ENCODE measurements at regions of chr15 and their contacts with region 1.

Region 1: DNA sequence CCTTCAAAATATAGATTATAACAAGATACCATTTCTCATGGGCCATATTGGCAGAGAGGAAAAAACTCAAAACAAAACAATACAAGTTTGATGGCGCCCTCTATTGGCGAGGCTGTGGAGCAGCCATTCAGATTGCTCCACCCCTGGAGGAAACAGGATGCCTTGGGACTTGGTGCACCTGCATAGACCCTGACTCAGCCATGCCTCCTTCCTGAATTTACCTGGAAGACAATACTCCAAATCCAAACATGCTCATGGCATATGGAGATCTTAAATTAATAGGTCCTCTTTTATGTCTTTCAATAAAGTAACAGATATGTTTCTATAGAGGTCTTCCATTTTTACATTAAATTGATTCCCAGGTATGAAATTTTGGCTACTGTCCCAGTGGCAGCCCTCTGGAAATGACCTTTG is 90.0 kb downstream of the APBA2 start:
- DNase-seq: peak; percentile 50 to 84 (median 76)
- ATAC-seq: peak; percentile 61
- H3K4me3 ChIP-seq: no peak overlapping the region
- H3K4me3 Mint-ChIP-seq: no peak overlapping the region
- H3K27ac ChIP-seq: no peak overlapping the region
- H3K27ac Mint-ChIP-seq: peak overlapping the region; percentile 80
- H3K4me1 ChIP-seq: peaks cover 54% of the 10 kb centered on the region
- H3K4me1 Mint-ChIP-seq: peaks cover 62% of the 10 kb centered on the region
- H3K27me3 ChIP-seq: no peaks in the 10 kb centered on the region
- H3K27me3 Mint-ChIP-seq: no peaks in the 10 kb centered on the region
- CTCF ChIP-seq: peak; percentile 97

Region 2: DNA sequence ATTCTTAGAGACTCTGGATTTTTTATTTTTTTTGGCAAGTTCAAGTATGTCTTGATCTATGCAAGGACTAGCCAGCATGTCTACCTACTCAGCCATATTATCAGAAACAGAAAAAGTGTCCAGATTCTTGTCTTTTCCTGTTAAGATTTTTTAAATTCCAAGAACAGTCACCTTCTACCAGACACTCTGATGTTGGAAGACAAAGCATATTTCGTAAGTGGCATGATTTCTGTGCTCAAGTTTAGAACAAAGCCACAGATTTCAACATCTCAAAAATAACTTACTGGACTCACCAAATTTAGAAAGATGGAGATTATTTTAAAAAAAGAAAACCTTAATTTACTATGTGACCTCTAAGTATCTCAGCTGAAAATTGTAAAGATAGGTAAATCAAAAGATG is 189.3 kb before region 1 on chr15:
- CTCF ChIA-PET with region 1: no interaction called
- POLR2A ChIA-PET with region 1: no interaction called
- intact Hi-C with region 1: loop called in 1 of 2 experiments (anchors 10 kb)
- DNase-seq: no peak
- ATAC-seq: no peak
- H3K4me3 ChIP-seq: no peak overlapping the region
- H3K4me3 Mint-ChIP-seq: no peak overlapping the region
- H3K27ac ChIP-seq: no peak overlapping the region
- H3K27ac Mint-ChIP-seq: no peak overlapping the region
- H3K4me1 ChIP-seq: no peaks in the 10 kb centered on the region
- H3K4me1 Mint-ChIP-seq: peaks cover 5% of the 10 kb centered on the region
- H3K27me3 ChIP-seq: no peaks in the 10 kb centered on the region
- H3K27me3 Mint-ChIP-seq: peaks cover 17% of the 10 kb centered on the region
- CTCF ChIP-seq: no peak

Region 3: GRCh38 chr15:28885630-28886430 is 89.9 kb before region 1 on chr15 and contains the start of gene APBA2:
- CTCF ChIA-PET with region 1: interaction called, 41 read pairs
- POLR2A ChIA-PET with region 1: interaction called, 8 read pairs
- intact Hi-C with region 1: loop called (anchors 1 kb)
- DNase-seq: peak; percentile 9 to 79 (median 60)
- ATAC-seq: peak; percentile 59
- H3K4me3 ChIP-seq: peak within 1 kb of the TSS; percentile 75 to 76
- H3K4me3 Mint-ChIP-seq: peak within 1 kb of the TSS; percentile 91
- H3K27ac ChIP-seq: peak within 1 kb of the TSS; percentile 67 to 69
- H3K27ac Mint-ChIP-seq: peak within 1 kb of the TSS; percentile 99
- H3K4me1 ChIP-seq: peaks cover 44% of the 10 kb centered on the region
- H3K4me1 Mint-ChIP-seq: peaks cover 46% of the 10 kb centered on the region
- H3K27me3 ChIP-seq: no peaks in the 10 kb centered on the region
- H3K27me3 Mint-ChIP-seq: no peaks in the 10 kb centered on the region
- CTCF ChIP-seq: no peak
- total RNA-seq, gene APBA2: 106 to 108 TPM

Region 4: DNA sequence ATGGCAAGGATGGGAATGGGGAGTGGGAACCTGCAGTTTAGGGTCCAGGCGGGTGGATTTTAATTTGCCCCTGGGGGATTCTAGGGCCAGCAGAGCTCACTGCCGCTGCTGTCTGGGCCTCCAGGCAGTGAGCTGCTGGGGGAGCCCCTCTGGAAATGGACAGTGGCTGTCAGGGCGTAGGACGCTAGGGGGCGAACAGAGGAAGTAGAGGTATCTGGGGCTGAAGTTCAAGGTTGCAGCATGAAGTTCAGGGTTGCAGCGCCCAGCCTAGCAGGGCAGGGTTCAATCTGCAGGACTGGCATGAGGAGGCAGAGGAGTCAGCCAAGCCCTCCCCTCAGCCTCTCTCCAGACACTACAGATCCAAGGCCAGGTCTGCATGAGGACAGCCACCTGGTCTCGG is 40.4 kb before region 1 on chr15:
- CTCF ChIA-PET with region 1: interaction called, 37 read pairs
- POLR2A ChIA-PET with region 1: no interaction called
- intact Hi-C with region 1: loop called (anchors 1 kb)
- DNase-seq: peak; percentile 35 to 82 (median 72)
- ATAC-seq: peak; percentile 67
- H3K4me3 ChIP-seq: peak overlapping the region in 1 of 2 experiments; percentile 13
- H3K4me3 Mint-ChIP-seq: peak overlapping the region; percentile 63
- H3K27ac ChIP-seq: peak overlapping the region in 1 of 2 experiments; percentile 81
- H3K27ac Mint-ChIP-seq: peak overlapping the region; percentile 96
- H3K4me1 ChIP-seq: peaks cover 70% of the 10 kb centered on the region
- H3K4me1 Mint-ChIP-seq: peaks cover 89% of the 10 kb centered on the region
- H3K27me3 ChIP-seq: no peaks in the 10 kb centered on the region
- H3K27me3 Mint-ChIP-seq: no peaks in the 10 kb centered on the region
- CTCF ChIP-seq: peak; percentile 61

Region 5: GRCh38 chr15:28948036-28948435 is 27.7 kb before region 1 on chr15:
- CTCF ChIA-PET with region 1: interaction called, 10 read pairs
- POLR2A ChIA-PET with region 1: interaction called, 3 read pairs
- intact Hi-C with region 1: loop called in 1 of 2 experiments (anchors 2 kb)
- DNase-seq: peak in 1 of 9 experiments; percentile 43
- ATAC-seq: no peak
- H3K4me3 ChIP-seq: peak overlapping the region; percentile 18 to 40
- H3K4me3 Mint-ChIP-seq: peak overlapping the region; percentile 84
- H3K27ac ChIP-seq: peak overlapping the region; percentile 59 to 67
- H3K27ac Mint-ChIP-seq: peak overlapping the region; percentile 98
- H3K4me1 ChIP-seq: peaks cover 86% of the 10 kb centered on the region
- H3K4me1 Mint-ChIP-seq: peaks cover 81% of the 10 kb centered on the region
- H3K27me3 ChIP-seq: no peaks in the 10 kb centered on the region
- H3K27me3 Mint-ChIP-seq: no peaks in the 10 kb centered on the region
- CTCF ChIP-seq: no peak

Region 6: GRCh38 chr15:29018120-29018805 is 42.5 kb after region 1 on chr15:
- CTCF ChIA-PET with region 1: no interaction called
- POLR2A ChIA-PET with region 1: no interaction called
- intact Hi-C with region 1: no loop called
- DNase-seq: peak in 1 of 9 experiments; percentile 39
- ATAC-seq: no peak
- H3K4me3 ChIP-seq: no peak overlapping the region
- H3K4me3 Mint-ChIP-seq: no peak overlapping the region
- H3K27ac ChIP-seq: no peak overlapping the region
- H3K27ac Mint-ChIP-seq: no peak overlapping the region
- H3K4me1 ChIP-seq: peaks cover 6% of the 10 kb centered on the region
- H3K4me1 Mint-ChIP-seq: peaks cover 66% of the 10 kb centered on the region
- H3K27me3 ChIP-seq: no peaks in the 10 kb centered on the region
- H3K27me3 Mint-ChIP-seq: no peaks in the 10 kb centered on the region
- CTCF ChIP-seq: no peak

Region 7: GRCh38 chr15:29090617-29091466 is 115.1 kb after region 1 on chr15:
- CTCF ChIA-PET with region 1: interaction called, 4 read pairs
- POLR2A ChIA-PET with region 1: no interaction called
- intact Hi-C with region 1: loop called (anchors 2 kb)
- DNase-seq: peak; percentile 21 to 70 (median 52)
- ATAC-seq: peak; percentile 77
- H3K4me3 ChIP-seq: peak overlapping the region in 1 of 2 experiments; percentile 30
- H3K4me3 Mint-ChIP-seq: no peak overlapping the region
- H3K27ac ChIP-seq: peak overlapping the region in 1 of 2 experiments; percentile 74
- H3K27ac Mint-ChIP-seq: peak overlapping the region; percentile 55
- H3K4me1 ChIP-seq: peaks cover 33% of the 10 kb centered on the region
- H3K4me1 Mint-ChIP-seq: peaks cover 39% of the 10 kb centered on the region
- H3K27me3 ChIP-seq: no peaks in the 10 kb centered on the region
- H3K27me3 Mint-ChIP-seq: no peaks in the 10 kb centered on the region
- CTCF ChIP-seq: peak; percentile 80